ENCODE measurements at regions of chr3 and their contacts with region 1.

Region 1: GRCh38 chr3:52897130-52898122 is at the start of gene STIMATE:
- DNase-seq: no peak
- ATAC-seq: peak; percentile 93
- H3K4me3 ChIP-seq: peak within 1 kb of the TSS; percentile 95
- H3K27ac ChIP-seq: peak within 1 kb of the TSS; percentile 40
- H3K4me1 ChIP-seq: peaks cover 13% of the 10 kb centered on the region
- H3K27me3 ChIP-seq: no peaks in the 10 kb centered on the region
- CTCF ChIP-seq: no peak
- EP300 ChIP-seq: no peak
- POLR2A ChIP-seq: peak; percentile 64
- RAD21 ChIP-seq: no peak
- polyA plus RNA-seq, gene STIMATE: 0.24 to 0.68 TPM

Region 2: GRCh38 chr3:51063053-51063452 is 1834.4 kb before region 1 on chr3:
- CTCF ChIA-PET with region 1: no interaction called
- POLR2A ChIA-PET with region 1: no interaction called
- RAD21 ChIA-PET with region 1: no interaction called
- SMC1A ChIA-PET with region 1: no interaction called
- in situ Hi-C with region 1: no loop called
- intact Hi-C with region 1: no loop called
- DNase-seq: no peak
- ATAC-seq: no peak
- H3K4me3 ChIP-seq: no peak overlapping the region
- H3K27ac ChIP-seq: no peak overlapping the region
- H3K4me1 ChIP-seq: no peaks in the 10 kb centered on the region
- H3K27me3 ChIP-seq: peaks cover 0 to 3% of the 10 kb centered on the region in 2 experiments; a peak in 3 of 4 replicates
- CTCF ChIP-seq: no peak
- EP300 ChIP-seq: no peak
- POLR2A ChIP-seq: no peak
- RAD21 ChIP-seq: no peak

Region 3: DNA sequence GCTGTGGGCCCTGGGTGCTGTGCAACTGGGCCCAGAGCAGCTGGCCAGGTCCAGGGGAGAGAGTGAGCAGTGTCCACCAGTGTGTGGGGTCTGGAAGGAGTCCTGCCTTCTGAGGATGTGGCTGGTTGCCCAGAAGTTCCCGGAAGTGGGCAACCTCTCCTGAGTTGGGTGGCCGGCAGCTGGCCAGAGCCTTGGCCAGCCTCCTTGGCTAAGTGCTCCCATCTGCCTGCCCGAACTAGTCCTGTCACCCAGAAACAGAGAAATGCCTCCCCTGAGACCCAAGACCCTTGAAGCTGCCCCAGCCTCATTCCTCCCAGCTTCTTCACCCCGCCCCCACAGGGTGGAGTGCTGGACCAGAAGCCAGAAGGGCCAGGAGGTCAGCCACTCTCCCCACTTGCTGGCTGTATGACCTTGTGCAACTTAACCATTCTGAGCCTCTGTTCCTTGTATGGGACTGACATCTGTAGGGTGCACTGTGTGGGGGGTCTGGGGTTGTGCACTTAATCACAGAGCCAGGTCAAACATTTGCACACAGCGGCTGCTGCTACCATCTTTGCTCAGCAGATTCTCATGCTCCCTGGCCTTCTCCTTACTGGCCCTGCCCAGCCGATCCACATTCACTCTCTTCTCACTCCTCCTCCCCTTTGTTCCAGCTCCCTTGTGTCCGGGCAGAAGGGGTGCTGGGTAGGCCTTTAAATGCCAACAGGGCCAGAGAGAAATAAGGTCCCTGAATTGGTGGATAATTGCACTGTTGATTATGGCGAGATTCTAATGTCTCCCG is 706.9 kb before region 1 on chr3:
- CTCF ChIA-PET with region 1: no interaction called
- POLR2A ChIA-PET with region 1: no interaction called
- RAD21 ChIA-PET with region 1: no interaction called
- SMC1A ChIA-PET with region 1: no interaction called
- in situ Hi-C with region 1: no loop called
- intact Hi-C with region 1: no loop called
- DNase-seq: no peak
- ATAC-seq: no peak
- H3K4me3 ChIP-seq: no peak overlapping the region
- H3K27ac ChIP-seq: no peak overlapping the region
- H3K4me1 ChIP-seq: no peaks in the 10 kb centered on the region
- H3K27me3 ChIP-seq: no peaks in the 10 kb centered on the region
- CTCF ChIP-seq: no peak
- EP300 ChIP-seq: no peak
- POLR2A ChIP-seq: no peak
- RAD21 ChIP-seq: no peak

Region 4: GRCh38 chr3:52714335-52715302 is 182.8 kb before region 1 on chr3:
- CTCF ChIA-PET with region 1: no interaction called
- POLR2A ChIA-PET with region 1: no interaction called
- RAD21 ChIA-PET with region 1: no interaction called
- SMC1A ChIA-PET with region 1: no interaction called
- in situ Hi-C with region 1: no loop called
- intact Hi-C with region 1: no loop called
- DNase-seq: no peak
- ATAC-seq: no peak
- H3K4me3 ChIP-seq: no peak overlapping the region
- H3K27ac ChIP-seq: no peak overlapping the region
- H3K4me1 ChIP-seq: peaks cover 9% of the 10 kb centered on the region
- H3K27me3 ChIP-seq: no peaks in the 10 kb centered on the region
- CTCF ChIP-seq: no peak
- EP300 ChIP-seq: no peak
- POLR2A ChIP-seq: no peak
- RAD21 ChIP-seq: no peak

Region 5: GRCh38 chr3:52742418-52743041 is 154.9 kb before region 1 on chr3:
- CTCF ChIA-PET with region 1: interaction called, 5 read pairs
- POLR2A ChIA-PET with region 1: interaction called, 5 read pairs
- RAD21 ChIA-PET with region 1: no interaction called
- SMC1A ChIA-PET with region 1: interaction called, 4 read pairs
- in situ Hi-C with region 1: no loop called
- intact Hi-C with region 1: loop called (anchors 2 kb)
- DNase-seq: peak; percentile 15
- ATAC-seq: peak; percentile 83
- H3K4me3 ChIP-seq: no peak overlapping the region
- H3K27ac ChIP-seq: no peak overlapping the region
- H3K4me1 ChIP-seq: no peaks in the 10 kb centered on the region
- H3K27me3 ChIP-seq: no peaks in the 10 kb centered on the region
- CTCF ChIP-seq: peak; percentile 60 to 80 (median 68); a peak in 5 of 6 replicates
- EP300 ChIP-seq: no peak
- POLR2A ChIP-seq: no peak
- RAD21 ChIP-seq: peak; percentile 91

Region 6: GRCh38 chr3:52873433-52874159 is 23.8 kb before region 1 on chr3:
- CTCF ChIA-PET with region 1: interaction called, 28 read pairs
- POLR2A ChIA-PET with region 1: interaction called, 8 read pairs
- RAD21 ChIA-PET with region 1: interaction called, 5 read pairs
- SMC1A ChIA-PET with region 1: interaction called, 25 read pairs
- in situ Hi-C with region 1: no loop called
- intact Hi-C with region 1: no loop called
- DNase-seq: no peak
- ATAC-seq: no peak
- H3K4me3 ChIP-seq: no peak overlapping the region
- H3K27ac ChIP-seq: no peak overlapping the region
- H3K4me1 ChIP-seq: peaks cover 7% of the 10 kb centered on the region; the same call in 1 of the 2 replicates
- H3K27me3 ChIP-seq: no peaks in the 10 kb centered on the region
- CTCF ChIP-seq: no peak
- EP300 ChIP-seq: no peak
- POLR2A ChIP-seq: no peak
- RAD21 ChIP-seq: no peak

Region 7: DNA sequence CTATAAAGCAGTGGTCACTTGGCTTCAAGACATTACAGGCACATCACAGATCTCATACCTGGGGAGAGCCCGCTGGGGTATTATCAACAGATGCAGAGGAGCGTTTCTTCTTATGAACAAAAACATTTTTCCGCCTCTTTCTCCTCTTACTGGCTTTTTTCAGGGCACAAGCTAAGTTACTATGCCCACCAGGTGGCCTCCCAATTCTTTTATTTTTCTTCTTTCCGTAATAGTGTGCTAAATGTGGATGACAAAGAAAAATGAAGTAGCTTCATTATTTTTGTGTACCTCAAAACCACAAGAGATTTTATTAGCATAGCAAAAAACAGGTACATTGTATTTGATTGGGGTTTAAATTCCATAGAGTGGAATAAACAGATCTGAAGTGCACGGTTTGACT is 10.1 kb after region 1 on chr3:
- CTCF ChIA-PET with region 1: interaction called, 17 read pairs
- POLR2A ChIA-PET with region 1: interaction called, 3 read pairs
- RAD21 ChIA-PET with region 1: no interaction called
- SMC1A ChIA-PET with region 1: interaction called, 11 read pairs
- in situ Hi-C with region 1: no loop called
- intact Hi-C with region 1: no loop called
- DNase-seq: no peak
- ATAC-seq: no peak
- H3K4me3 ChIP-seq: no peak overlapping the region
- H3K27ac ChIP-seq: no peak overlapping the region
- H3K4me1 ChIP-seq: no peaks in the 10 kb centered on the region
- H3K27me3 ChIP-seq: no peaks in the 10 kb centered on the region
- CTCF ChIP-seq: no peak
- EP300 ChIP-seq: no peak
- POLR2A ChIP-seq: no peak
- RAD21 ChIP-seq: no peak

Region 8: DNA sequence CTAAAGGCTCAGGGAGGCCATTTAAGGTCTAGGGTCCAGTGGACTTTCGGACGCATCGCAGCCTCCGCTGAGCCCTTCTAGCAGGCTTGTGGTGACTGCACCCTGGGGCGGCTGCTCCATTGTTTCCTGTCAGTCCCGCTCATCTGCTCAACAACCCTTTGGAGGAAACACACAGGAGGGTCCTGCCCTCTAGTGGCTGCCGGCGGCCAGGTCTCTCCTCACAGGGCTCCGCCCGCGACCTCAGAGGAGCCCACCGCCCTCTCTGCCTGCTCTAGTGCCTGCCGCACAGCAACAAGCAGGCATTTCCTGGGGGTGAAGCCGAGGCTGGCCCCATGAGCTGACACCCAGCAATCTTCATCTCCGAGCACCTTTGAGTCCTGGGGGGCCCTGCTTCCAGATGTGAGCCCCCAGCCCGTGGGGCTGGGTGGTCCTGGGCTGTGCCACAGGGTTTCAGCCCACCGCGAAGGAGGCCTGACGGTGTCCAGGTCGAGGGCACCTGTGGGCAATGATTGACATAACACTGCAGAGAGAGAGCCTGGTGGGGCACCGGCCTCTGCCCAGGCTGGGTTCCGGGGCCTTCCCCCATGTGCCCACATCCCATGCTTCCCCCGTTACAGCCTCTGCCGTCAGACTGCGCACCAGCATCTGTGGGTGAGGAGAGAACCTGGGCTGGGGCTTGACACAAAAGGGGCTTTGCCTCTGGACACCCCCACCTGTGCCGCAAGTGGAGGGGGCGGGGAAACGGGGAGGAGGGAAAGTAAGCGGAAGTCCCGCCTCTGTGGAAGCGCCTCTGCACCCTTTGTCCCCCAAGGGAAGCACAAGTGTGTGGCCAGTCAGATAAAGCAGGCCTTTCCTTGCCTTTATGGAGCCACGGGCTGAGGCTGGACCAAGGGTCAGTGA is 175.5 kb after region 1 on chr3:
- CTCF ChIA-PET with region 1: interaction called, 4 read pairs
- POLR2A ChIA-PET with region 1: no interaction called
- RAD21 ChIA-PET with region 1: no interaction called
- SMC1A ChIA-PET with region 1: interaction called, 3 read pairs
- in situ Hi-C with region 1: no loop called
- intact Hi-C with region 1: loop called (anchors 5 kb)
- DNase-seq: peak; percentile 43
- ATAC-seq: peak; percentile 97
- H3K4me3 ChIP-seq: peak overlapping the region; percentile 85
- H3K27ac ChIP-seq: peak overlapping the region; percentile 51
- H3K4me1 ChIP-seq: peaks cover 9% of the 10 kb centered on the region
- H3K27me3 ChIP-seq: no peaks in the 10 kb centered on the region
- CTCF ChIP-seq: peak; percentile 95 to 96 (median 95); a peak in 5 of 6 replicates
- EP300 ChIP-seq: no peak
- POLR2A ChIP-seq: no peak
- RAD21 ChIP-seq: peak; percentile 86

Measured in GM12878 (cell line).